Right lobe of liver (tissue), 6 donors: ENCODE measurements at regions of chr3 and their contacts with region 1.

Region 1: DNA sequence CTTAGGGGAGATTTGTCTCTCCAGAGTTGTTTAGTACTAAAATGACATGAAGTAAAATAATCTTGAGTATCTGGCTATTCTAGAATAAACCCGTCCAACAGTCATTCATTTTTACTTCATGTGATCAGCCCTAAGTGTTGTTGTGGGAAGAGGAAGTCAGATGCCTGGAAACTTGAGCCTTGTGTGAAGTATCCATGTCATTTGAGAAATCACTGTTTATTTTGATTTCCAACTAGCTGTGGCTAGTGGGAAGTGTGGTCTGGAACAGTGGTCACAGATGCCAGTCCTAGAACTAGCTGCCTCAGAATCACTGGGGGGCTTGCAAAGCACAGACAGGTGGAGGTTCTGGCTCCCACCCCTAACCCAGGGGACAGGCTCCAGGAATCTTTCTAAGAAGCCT is 77.7 kb upstream of the LIMD1 start:
- DNase-seq: no peak
- ATAC-seq: no peak
- H3K4me3 ChIP-seq: no peak overlapping the region
- H3K27ac ChIP-seq: no peak overlapping the region
- H3K4me1 ChIP-seq: no peaks in the 10 kb centered on the region
- H3K27me3 ChIP-seq: no peaks in the 10 kb centered on the region
- CTCF ChIP-seq: no peak
- POLR2A ChIP-seq: no peak

Region 2: GRCh38 chr3:45275006-45275704 is 241.7 kb before region 1 on chr3:
- intact Hi-C with region 1: no loop called
- DNase-seq: no peak
- ATAC-seq: no peak
- H3K4me3 ChIP-seq: no peak overlapping the region
- H3K27ac ChIP-seq: no peak overlapping the region
- H3K4me1 ChIP-seq: no peaks in the 10 kb centered on the region
- H3K27me3 ChIP-seq: no peaks in the 10 kb centered on the region
- CTCF ChIP-seq: no peak
- POLR2A ChIP-seq: no peak

Region 3: GRCh38 chr3:45677033-45677433 is 160.2 kb after region 1 on chr3:
- intact Hi-C with region 1: loop called in 1 of 2 experiments (anchors 10 kb)
- DNase-seq: peak in 2 of 3 donors; percentile 61 to 66
- ATAC-seq: peak; percentile 69 to 86 (median 79)
- H3K4me3 ChIP-seq: no peak overlapping the region
- H3K27ac ChIP-seq: peak overlapping the region in 2 of 3 donors; percentile 17 to 53
- H3K4me1 ChIP-seq: peaks cover 0 to 16% (median 8%) of the 10 kb centered on the region in 4 donors
- H3K27me3 ChIP-seq: no peaks in the 10 kb centered on the region
- CTCF ChIP-seq: no peak
- POLR2A ChIP-seq: no peak